Prostate gland (tissue), 2 donors: ENCODE measurements at regions of chr10 and their contacts with region 1.

Region 1: DNA sequence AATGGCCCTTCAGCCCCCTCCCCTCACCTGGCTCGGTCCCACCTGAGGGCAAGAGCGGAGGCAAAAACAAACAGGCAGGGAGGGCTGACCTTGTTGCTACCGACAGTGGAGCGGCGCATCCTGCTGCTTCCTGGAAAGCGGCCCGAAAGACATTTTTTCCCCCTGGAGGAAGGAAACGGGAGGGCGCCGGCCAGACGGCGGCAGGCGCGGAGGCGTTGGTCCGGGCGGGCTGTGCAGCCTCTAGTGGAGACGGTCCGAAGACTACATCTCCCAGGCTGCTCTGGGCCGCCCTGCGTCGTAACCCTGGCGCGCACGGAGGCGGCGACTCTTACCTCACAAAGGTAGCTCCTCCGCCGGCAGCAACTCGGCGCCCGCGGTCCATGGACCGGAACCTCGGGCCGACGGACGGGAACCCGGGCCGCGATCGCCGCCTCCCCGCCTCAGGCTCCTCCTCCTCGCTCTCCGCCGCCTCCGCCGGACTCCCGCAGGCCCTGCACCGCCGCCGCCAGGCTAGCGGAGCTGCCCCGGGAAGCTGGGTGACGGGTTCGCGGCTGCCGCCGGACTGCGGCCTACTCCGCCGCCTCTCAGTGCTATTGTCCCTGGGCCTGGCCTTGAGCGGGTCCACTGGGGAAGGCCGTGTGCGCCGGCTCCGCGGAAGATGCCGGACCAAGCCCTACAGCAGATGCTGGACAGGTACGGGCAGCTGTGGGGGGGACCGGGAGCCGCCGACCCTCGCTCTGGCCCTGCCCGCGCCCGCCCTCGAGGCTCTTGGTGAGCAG is at the starts of genes CPEB3 and MARCHF5:
- DNase-seq: peak; percentile 97
- H3K4me3 ChIP-seq: peak within 1 kb of the TSS; percentile 78 to 88
- H3K27ac ChIP-seq: peak within 1 kb of the TSS; percentile 97 to 99
- H3K4me1 ChIP-seq: no peaks in the 10 kb centered on the region
- H3K27me3 ChIP-seq: no peaks in the 10 kb centered on the region
- CTCF ChIP-seq: peak; percentile 49 to 93 (median 73)
- POLR2A ChIP-seq: peak; percentile 88
- total RNA-seq, gene CPEB3: 10.6 to 16.9 TPM
- total RNA-seq, gene MARCHF5: 20.8 TPM

Region 2: GRCh38 chr10:91838199-91838598 is 452.8 kb before region 1 on chr10:
- intact Hi-C with region 1: no loop called
- DNase-seq: no peak
- H3K4me3 ChIP-seq: no peak overlapping the region
- H3K27ac ChIP-seq: no peak overlapping the region
- H3K4me1 ChIP-seq: no peaks in the 10 kb centered on the region
- H3K27me3 ChIP-seq: no peaks in the 10 kb centered on the region
- CTCF ChIP-seq: no peak
- POLR2A ChIP-seq: no peak

Region 3: GRCh38 chr10:92181575-92181974 is 109.5 kb before region 1 on chr10:
- intact Hi-C with region 1: no loop called
- DNase-seq: no peak
- H3K4me3 ChIP-seq: no peak overlapping the region
- H3K27ac ChIP-seq: no peak overlapping the region
- H3K4me1 ChIP-seq: no peaks in the 10 kb centered on the region
- H3K27me3 ChIP-seq: no peaks in the 10 kb centered on the region
- CTCF ChIP-seq: peak in 1 of 4 experiments; percentile 4
- POLR2A ChIP-seq: no peak

Region 4: DNA sequence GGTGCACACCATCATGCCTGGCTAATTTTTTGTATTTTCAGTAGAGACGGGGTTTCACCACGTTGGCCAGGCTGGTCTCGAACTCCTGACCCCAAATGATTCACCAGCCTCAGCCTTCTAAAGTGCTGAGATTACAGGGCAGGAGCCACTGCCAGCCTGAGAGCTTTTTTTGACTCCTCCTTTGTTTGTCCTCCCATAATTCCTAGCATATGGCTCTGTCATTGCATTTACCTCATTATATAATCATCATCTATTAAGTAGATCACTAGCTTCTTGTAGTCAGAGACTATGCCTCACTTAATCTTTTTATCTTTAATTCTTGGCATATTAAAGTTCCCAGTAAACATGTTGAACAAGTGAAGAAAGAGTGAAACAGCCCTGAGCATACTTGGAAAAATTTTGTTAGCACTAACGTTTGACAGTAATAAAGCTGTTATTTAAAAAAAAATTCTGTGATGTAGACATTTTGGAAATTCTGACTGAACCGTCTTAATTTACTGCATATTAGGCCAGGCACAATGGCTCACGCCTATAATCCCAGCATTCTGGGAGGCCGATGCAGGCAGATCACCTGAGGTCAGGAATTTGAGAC is 82.2 kb before region 1 on chr10:
- intact Hi-C with region 1: no loop called
- DNase-seq: no peak
- H3K4me3 ChIP-seq: no peak overlapping the region
- H3K27ac ChIP-seq: peak overlapping the region; percentile 24 to 36
- H3K4me1 ChIP-seq: peaks cover 4% of the 10 kb centered on the region
- H3K27me3 ChIP-seq: no peaks in the 10 kb centered on the region
- CTCF ChIP-seq: no peak
- POLR2A ChIP-seq: no peak

Region 5: GRCh38 chr10:92239600-92240288 is 51.3 kb before region 1 on chr10:
- intact Hi-C with region 1: loop called (anchors 1 kb)
- DNase-seq: peak; percentile 19
- H3K4me3 ChIP-seq: peak overlapping the region; percentile 63 to 74
- H3K27ac ChIP-seq: peak overlapping the region; percentile 87 to 92
- H3K4me1 ChIP-seq: peaks cover 3% of the 10 kb centered on the region
- H3K27me3 ChIP-seq: no peaks in the 10 kb centered on the region
- CTCF ChIP-seq: no peak
- POLR2A ChIP-seq: no peak